Activated CD8-positive, alpha-beta T cell treated with anti-CD3 and anti-CD28 coated beads for 36 hours (primary cell): ENCODE measurements at regions of chr7 and their contacts with region 1.

Region 1: GRCh38 chr7:105808703-105809590 is 67.5 kb downstream of the ATXN7L1 start:
- DNase-seq: peak; percentile 97
- ATAC-seq: peak; percentile 86
- H3K4me3 Mint-ChIP-seq: no peak overlapping the region
- H3K27ac Mint-ChIP-seq: peak overlapping the region; percentile 84
- H3K4me1 Mint-ChIP-seq: peaks cover 60% of the 10 kb centered on the region
- H3K27me3 Mint-ChIP-seq: no peaks in the 10 kb centered on the region
- CTCF ChIP-seq: no peak

Region 2: GRCh38 chr7:105652359-105652993 is 156.5 kb before region 1 on chr7:
- CTCF ChIA-PET with region 1: interaction called, 18 read pairs
- POLR2A ChIA-PET with region 1: no interaction called
- intact Hi-C with region 1: no loop called
- DNase-seq: peak; percentile 81
- ATAC-seq: peak; percentile 95
- H3K4me3 Mint-ChIP-seq: no peak overlapping the region
- H3K27ac Mint-ChIP-seq: no peak overlapping the region
- H3K4me1 Mint-ChIP-seq: peaks cover 5% of the 10 kb centered on the region
- H3K27me3 Mint-ChIP-seq: no peaks in the 10 kb centered on the region
- CTCF ChIP-seq: peak; percentile 85

Region 3: GRCh38 chr7:105759670-105760550 is 49.0 kb before region 1 on chr7:
- CTCF ChIA-PET with region 1: interaction called, 11 read pairs
- POLR2A ChIA-PET with region 1: no interaction called
- intact Hi-C with region 1: no loop called
- DNase-seq: peak; percentile 40
- ATAC-seq: no peak
- H3K4me3 Mint-ChIP-seq: no peak overlapping the region
- H3K27ac Mint-ChIP-seq: no peak overlapping the region
- H3K4me1 Mint-ChIP-seq: peaks cover 26% of the 10 kb centered on the region
- H3K27me3 Mint-ChIP-seq: no peaks in the 10 kb centered on the region
- CTCF ChIP-seq: peak; percentile 82

Region 4: DNA sequence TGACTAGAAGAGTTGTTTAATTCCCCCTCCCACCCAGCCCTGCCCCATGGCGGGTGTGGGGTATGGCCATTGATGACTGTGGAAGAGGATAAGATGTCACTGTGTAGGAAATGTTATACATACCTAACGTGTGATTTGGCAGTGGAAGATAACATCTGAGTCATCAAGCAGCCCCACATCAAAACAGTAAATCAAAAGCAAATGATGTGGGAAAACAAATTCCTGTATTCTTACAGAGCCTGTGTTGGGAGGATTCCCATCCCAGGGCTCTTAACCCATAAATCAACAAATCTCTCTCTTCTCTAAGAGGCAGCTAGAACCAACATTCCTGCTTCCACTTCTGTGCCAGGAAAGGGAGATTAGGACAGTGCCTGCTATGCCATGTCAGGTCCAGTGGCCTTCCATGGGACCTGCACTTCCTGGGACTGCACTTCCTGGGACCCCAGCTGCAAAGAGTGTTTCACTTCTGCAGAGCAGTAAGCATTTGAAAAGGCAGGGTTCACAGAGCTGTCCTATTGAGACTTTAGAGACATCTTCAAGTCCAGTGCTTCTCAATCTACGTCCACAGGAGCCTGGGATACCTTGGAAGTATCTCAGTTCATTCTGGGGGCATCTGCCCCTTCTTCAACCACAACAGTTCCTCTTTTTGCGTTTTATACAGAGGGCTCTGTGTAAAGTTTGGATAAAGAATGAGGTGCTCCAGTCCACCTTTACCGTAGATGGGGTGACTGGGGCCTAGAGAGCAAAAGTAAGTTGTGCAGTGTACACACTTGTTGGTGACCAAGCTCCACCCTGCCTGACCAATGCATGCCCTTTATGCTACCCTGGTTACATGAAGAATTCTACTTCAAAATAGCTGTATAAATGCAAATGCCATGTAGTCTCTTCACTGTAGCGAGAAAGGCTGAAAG is 21.7 kb after region 1 on chr7:
- CTCF ChIA-PET with region 1: no interaction called
- POLR2A ChIA-PET with region 1: no interaction called
- intact Hi-C with region 1: no loop called
- DNase-seq: no peak
- ATAC-seq: no peak
- H3K4me3 Mint-ChIP-seq: no peak overlapping the region
- H3K27ac Mint-ChIP-seq: no peak overlapping the region
- H3K4me1 Mint-ChIP-seq: peaks cover 9% of the 10 kb centered on the region
- H3K27me3 Mint-ChIP-seq: no peaks in the 10 kb centered on the region
- CTCF ChIP-seq: no peak

Region 5: DNA sequence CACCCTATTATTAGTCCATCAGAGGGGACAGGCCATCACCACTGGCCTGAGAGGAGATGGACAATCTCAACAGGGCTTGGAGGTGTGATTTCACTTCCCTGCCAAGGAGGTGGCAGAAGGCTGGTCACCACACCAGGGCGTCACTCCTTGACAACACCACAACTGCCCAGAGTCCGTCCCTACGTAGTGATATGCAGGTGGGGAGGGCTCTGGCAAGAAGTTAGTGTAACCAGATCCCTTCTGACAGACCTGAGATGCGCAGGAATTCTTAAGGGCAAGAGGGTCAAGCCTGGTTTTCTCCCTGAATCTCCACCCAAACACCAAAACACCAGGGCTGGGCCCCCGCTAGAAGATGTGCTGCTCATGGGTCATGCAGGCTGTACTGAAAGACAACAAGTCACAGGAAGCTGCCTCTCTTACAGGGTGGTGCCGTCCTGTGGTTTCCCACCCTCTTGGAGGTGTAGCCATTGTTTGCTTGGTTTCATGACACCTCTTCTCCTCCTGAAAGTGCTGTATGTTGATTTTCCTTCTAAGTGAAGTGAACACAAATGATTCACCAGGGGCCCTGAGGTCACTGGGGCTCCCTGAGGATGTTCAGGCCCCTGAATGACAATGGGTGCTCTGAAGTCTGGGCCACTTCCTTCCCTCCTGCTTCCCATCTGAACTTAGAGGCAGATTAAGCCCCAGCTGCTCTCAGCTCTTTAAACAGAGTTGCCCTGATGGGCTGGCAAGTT is 40.3 kb after region 1 on chr7:
- CTCF ChIA-PET with region 1: interaction called, 3 read pairs
- POLR2A ChIA-PET with region 1: interaction called, 3 read pairs
- intact Hi-C with region 1: loop called (anchors 2 kb)
- DNase-seq: peak; percentile 91
- ATAC-seq: peak; percentile 97
- H3K4me3 Mint-ChIP-seq: no peak overlapping the region
- H3K27ac Mint-ChIP-seq: peak overlapping the region; percentile 79
- H3K4me1 Mint-ChIP-seq: peaks cover 51% of the 10 kb centered on the region
- H3K27me3 Mint-ChIP-seq: no peaks in the 10 kb centered on the region
- CTCF ChIP-seq: no peak

Region 6: DNA sequence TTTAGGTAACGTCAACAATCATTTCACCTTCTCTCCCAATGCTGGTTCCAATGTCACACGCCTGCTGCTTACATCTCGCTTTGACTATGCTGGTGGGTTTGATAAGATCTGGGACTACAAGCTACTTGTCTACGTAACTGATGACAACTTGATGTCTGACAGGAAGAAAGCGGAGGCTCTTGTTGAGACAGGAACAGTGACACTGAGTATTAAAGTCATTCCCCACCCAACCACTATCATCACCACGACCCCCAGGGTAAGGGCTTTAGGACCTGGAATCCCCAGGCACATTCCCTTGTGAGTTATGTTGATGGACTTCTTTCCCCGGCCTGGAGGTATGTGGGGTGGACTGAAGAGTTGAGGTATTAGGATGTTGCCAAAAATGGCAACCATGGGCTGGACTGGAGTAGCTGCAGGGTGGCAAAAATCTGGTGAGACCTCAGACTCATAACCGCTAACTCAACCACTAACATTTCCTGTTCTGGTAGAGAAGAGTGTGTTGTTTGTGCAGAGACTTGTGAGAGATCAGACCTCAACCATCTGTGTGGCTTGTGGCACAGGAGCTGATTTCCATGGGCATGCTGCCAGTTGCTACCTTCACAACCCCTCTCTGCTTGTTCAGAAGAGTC is 213.4 kb after region 1 on chr7:
- CTCF ChIA-PET with region 1: no interaction called
- POLR2A ChIA-PET with region 1: interaction called, 3 read pairs
- intact Hi-C with region 1: loop called (anchors 1 kb)
- DNase-seq: peak; percentile 84
- ATAC-seq: peak; percentile 86
- H3K4me3 Mint-ChIP-seq: peak overlapping the region; percentile 22
- H3K27ac Mint-ChIP-seq: peak overlapping the region; percentile 77
- H3K4me1 Mint-ChIP-seq: peaks cover 56% of the 10 kb centered on the region
- H3K27me3 Mint-ChIP-seq: no peaks in the 10 kb centered on the region
- CTCF ChIP-seq: no peak